Cardiac septum (tissue), 1 donor: ENCODE measurements at regions of chr10 and their contacts with region 1.

Region 1: DNA sequence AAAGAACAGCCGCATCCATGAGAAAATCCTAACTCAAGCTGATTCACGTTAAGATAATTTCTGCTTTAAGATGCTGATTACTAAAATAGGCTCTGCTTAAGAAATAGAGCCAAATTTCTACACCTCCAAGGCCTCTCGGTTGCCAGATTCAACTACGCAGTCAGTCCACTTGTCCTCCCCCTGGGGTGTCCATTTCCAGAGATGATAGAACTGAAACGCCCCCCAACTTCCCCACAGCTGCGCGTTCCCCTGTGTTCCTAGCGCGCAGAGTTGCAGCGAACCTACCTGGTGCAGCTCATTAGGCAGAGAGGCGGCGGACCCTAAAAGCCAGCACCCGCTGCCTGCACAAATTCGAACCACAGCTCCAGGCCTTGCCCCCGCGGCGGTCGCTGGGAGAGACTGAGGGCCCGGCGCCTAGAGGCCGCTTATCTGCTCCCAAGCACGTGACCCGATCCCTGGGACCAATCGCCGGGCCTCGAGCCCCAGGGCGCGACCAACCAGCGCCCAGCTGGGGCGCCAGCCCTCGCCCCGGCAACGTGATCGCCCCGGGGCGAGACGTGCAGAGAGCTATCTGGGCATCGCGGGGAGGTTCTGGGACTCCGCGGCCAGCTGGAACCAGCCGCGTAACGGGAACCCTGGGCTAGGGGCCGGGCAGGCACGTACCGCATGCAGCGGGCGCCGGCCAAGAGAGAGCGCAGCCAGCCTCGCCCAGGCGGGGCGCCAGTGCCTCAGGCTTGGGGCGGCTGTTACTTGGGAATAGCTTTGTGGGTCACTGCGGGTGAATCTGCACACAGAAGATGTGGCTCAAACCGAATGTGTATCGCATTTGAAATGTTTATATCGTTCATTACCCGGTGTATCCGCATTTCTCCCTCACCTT is at the start of gene PPP1R3C:
- DNase-seq: peak; percentile 94
- total RNA-seq, gene PPP1R3C: 212 TPM

Region 2: DNA sequence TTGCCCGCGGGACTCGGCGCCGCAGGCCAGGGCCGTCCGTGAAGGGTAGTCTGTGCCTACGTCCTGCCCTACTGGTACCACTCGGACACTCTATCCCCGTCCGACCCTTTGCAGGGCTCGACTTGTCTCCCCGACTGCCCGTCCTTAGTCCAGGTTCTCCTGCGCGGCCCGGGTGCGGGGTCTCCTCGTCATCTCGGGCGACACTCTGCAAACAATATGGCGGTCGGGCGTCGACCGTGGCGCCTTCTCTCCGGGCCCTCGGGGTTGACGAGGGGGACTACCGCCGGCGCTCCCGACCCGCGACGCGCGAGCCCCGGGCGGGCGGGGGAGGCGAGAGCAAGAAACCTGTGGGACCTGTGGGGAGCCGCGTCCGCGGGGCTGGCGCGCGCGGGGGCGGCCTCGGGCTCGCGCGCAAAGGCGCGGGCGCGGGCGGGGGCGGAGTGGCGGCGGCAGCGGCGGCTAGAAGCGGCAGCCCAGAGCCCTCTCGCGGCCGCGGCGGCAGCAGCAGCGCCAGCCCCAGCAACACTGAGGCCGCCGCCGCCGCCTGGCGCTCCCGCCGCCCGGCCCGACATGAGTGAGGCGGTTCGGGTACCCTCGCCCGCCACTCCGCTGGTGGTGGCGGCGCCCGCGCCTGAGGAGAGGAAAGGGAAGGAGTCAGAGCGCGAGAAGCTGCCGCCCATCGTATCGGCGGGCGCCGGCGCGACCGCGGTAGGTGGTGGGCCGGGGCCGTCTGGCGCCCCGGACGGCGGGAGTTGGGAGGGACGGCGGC is 222.9 kb before region 1 on chr10 and contains the start of gene HECTD2:
- intact Hi-C with region 1: loop called (anchors 1 kb)
- DNase-seq: peak; percentile 85
- total RNA-seq, gene HECTD2: 13.2 TPM

Region 3: DNA sequence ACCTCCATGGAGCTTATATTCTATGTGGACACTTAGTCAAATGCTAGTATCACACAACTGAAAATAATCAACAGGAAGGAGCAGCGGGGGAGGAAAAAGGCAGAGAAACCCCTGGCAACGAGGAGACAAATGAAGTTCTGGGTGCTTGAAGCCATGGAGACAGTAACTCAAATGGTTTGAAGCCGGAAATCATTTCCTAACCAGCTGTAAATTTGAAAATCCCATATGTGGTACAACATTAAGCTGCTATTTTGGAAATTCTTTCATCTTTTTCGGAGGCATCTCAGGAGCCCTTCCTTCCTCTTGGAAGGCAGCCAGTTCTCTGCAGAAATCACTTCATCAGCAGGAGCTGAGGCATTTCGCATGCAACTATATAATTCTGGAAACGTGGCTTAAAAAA is 91.4 kb before region 1 on chr10:
- intact Hi-C with region 1: no loop called
- DNase-seq: no peak

Region 4: DNA sequence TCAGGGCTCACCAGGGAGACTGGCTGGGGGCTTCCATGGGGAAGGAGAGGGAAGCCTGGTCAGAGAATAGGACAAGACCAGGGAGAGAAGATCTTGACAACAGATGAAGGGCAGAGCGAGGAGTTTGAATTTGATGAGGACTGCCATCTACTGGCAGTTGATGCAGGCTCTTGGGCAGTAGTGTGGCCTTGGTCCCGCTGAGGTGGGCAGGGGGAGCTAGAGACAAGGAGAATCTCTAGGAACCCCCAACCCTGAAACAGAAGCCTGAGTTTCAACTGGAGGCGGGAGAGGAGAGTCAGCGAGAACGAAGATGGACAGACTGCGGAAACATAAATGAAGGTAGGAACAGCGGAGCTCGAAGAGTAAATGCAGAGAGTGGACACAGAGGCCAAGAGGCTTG is 81.1 kb before region 1 on chr10:
- intact Hi-C with region 1: loop called (anchors 1 kb)
- DNase-seq: no peak

Region 5: GRCh38 chr10:91607646-91608403 is 25.1 kb before region 1 on chr10:
- intact Hi-C with region 1: loop called (anchors 2 kb)
- DNase-seq: no peak